ENCODE measurements at regions of chr5 and their contacts with region 1.

Region 1: DNA sequence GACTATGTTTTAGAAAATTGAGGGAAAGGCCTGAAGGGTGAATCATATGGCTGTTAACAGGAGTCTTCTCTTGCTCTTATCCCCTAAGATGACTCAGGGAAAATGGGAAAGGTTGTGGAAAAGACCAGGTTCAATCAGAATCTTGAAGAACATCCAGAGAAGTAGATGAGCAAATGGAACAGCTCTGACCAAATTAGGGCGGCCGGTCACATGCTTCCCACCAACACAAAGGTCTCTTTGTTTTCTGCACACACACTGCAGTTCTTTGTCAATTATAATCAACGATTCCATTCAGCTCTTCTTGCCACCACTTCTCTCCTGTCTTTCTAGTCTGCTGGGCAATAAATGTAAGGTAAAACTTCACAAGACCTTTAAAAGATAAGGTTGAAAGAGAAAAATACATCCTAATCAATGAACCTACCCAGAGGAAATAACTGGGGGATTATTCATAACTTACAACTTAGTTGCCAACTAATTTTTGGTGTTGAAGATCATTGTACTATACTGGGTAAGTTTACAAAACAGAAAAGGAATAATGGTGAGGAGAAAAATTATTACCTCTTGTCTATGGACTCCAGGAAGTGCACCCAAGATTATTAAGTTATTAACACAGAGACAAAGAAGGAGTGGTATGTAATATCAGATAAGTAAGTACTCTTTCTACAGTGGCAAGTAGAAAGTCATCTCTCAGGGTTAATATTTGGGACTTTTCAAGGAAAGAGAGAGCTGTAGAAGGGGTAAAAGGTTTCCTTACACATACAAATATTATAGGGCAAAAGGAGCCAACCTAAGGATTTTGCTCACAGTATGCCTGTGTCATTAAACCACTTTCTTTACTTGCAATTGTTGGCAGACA is 441.9 kb upstream of the PIK3R1 start:
- DNase-seq: no peak
- ATAC-seq: peak; percentile 6 to 38 (median 21)
- H3K4me3 ChIP-seq: no peak overlapping the region
- H3K27ac ChIP-seq: peak overlapping the region; percentile 59
- H3K4me1 ChIP-seq: peaks cover 42% of the 10 kb centered on the region
- H3K27me3 ChIP-seq: no peaks in the 10 kb centered on the region
- CTCF ChIP-seq: no peak

Region 2: DNA sequence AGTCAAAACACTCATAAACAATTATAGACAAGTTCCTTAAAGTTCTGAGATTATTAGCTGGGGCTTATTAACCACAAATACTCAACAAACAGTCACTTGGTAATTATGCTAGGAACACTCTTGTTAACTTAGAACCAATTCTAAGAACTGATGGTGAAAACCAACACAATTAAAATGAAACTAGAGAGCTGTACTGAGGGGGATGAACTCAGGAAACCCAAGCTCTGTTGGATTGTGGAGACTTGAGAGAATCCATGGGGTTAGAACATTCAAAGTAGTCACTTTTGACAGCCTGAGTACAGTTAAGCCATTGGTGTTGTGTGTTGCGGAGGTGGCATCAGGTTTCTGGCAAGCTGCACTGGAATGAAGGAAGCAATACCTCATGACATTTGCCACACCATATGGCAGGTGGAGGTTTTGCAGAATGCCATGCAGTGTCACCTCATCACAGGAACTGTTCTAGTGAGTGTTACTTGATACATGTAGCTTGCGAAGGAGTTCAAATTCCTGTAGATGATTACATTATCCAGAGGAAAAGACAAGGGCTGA is 96.1 kb before region 1 on chr5:
- intact Hi-C with region 1: loop called in 1 of 2 experiments (anchors 5 kb)
- DNase-seq: peak; percentile 59 to 85
- ATAC-seq: peak; percentile 96 to 98 (median 97)
- H3K4me3 ChIP-seq: peak overlapping the region; percentile 9
- H3K27ac ChIP-seq: peak overlapping the region; percentile 82
- H3K4me1 ChIP-seq: peaks cover 18% of the 10 kb centered on the region
- H3K27me3 ChIP-seq: no peaks in the 10 kb centered on the region
- CTCF ChIP-seq: no peak

Region 3: GRCh38 chr5:67809589-67809988 is 36.0 kb after region 1 on chr5:
- intact Hi-C with region 1: loop called in 1 of 2 experiments (anchors 5 kb)
- DNase-seq: no peak
- ATAC-seq: no peak
- H3K4me3 ChIP-seq: no peak overlapping the region
- H3K27ac ChIP-seq: peak overlapping the region; percentile 88
- H3K4me1 ChIP-seq: peaks cover 37% of the 10 kb centered on the region
- H3K27me3 ChIP-seq: no peaks in the 10 kb centered on the region
- CTCF ChIP-seq: no peak

Measured in psoas muscle (tissue), 8 donors.